ENCODE measurements at regions of chr6 and their contacts with region 1.

Region 1: DNA sequence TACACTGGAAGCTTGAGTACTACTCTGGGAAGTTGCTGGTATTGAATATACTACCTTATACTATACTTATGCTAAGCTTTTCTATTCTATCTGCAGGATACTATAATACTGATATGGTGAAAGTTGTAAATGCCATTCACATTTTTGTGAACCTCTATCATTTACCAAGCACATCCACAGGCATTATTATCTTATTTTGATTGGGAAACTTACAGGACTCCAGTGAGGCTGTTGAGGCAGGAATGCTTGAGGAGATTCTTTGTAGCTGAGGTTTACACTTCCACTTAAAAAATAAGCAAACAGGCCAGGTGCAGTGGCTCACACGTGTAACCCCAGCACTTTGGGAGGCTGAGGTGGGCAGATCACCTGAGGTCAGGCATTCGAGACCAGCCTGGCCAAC is 442.9 kb downstream of the QKI start:
- DNase-seq: no peak
- H3K4me3 ChIP-seq: no peak overlapping the region
- H3K27ac ChIP-seq: no peak overlapping the region
- H3K4me1 ChIP-seq: no peaks in the 10 kb centered on the region
- H3K27me3 ChIP-seq: no peaks in the 10 kb centered on the region
- CTCF ChIP-seq: no peak
- EP300 ChIP-seq: no peak
- POLR2A ChIP-seq: no peak

Region 2: DNA sequence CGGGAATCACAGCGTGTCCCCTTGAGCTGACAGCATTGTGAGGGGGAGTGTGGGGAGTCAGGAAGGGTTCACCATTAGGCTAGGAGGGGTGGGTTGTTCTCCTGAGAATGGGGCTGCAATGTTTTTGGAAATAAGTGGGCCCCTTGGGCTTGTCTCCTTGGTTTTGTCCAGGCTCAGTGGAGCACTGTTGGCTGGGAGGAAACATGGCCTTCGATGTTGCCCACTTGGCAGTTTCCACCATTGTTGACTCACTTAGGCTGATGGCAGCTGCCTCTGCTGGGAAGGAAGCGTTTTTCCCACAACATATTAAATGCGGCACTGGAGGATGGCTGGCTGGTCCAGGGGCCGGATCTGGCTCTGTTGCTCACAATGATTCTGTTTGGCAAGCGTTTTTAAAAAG is 69.2 kb after region 1 on chr6:
- intact Hi-C with region 1: no loop called
- DNase-seq: peak in 2 of 5 donors; percentile 40 to 68
- H3K4me3 ChIP-seq: no peak overlapping the region
- H3K27ac ChIP-seq: no peak overlapping the region
- H3K4me1 ChIP-seq: peaks cover 7% of the 10 kb centered on the region
- H3K27me3 ChIP-seq: no peaks in the 10 kb centered on the region
- CTCF ChIP-seq: no peak
- EP300 ChIP-seq: no peak
- POLR2A ChIP-seq: no peak

Region 3: DNA sequence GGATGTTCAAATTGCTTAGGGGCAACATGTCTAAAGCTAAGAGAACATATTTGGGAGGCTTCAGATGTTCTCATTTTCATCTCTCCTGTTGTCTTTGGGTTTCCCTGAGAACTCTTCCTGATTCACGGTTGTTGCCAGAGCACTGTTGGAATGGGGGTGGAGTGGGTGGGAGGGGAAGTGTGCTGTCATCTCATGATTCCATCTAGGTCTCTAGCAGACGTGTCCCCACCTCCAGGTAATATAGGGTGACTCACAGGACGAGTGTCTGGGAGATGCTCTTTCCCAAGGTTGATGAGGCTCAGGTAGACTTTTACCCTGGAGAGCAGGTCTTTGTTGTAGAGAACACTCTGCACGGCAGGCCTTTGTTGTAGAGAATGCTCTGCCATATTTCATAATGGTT is 194.0 kb after region 1 on chr6:
- intact Hi-C with region 1: loop called in 1 of 4 experiments (anchors 5 kb)
- DNase-seq: no peak
- H3K4me3 ChIP-seq: no peak overlapping the region
- H3K27ac ChIP-seq: no peak overlapping the region
- H3K4me1 ChIP-seq: no peaks in the 10 kb centered on the region
- H3K27me3 ChIP-seq: no peaks in the 10 kb centered on the region
- CTCF ChIP-seq: no peak
- EP300 ChIP-seq: no peak
- POLR2A ChIP-seq: no peak

Measured in ovary (tissue), 10 donors.